Astrocyte of the cerebellum (primary cell): ENCODE measurements at regions of chr12 and their contacts with region 1.

Region 1: DNA sequence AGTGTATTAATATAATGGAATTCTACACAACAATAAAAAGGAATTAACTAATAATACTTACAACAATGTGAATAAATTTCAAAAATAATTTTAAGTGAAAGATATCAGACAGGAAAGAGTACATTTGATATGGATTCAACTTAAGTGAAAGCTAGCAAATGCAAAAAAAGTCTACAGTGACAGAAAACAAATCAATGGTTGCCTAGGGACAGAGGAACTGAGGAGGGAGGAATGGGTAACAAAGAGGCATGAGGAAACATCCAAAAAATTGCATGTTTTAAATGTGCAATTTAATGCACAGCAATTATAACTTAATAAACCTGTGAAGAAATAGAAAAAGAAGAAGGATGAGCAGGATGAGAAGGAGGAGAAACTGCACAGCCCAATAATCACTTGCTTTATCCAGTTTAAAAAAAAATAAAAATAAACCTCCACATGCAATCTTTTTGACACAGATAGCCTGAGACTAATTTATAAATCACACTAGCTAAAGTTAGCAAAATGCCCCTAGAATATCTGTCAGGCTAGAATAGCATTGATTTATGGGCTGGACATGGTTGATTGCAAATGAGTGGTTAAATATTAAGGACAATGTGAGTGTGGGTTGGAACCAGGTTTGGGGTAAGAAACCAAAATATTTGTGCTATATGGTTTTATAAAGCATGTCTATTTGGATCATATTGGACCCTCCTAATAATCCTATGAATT is 1089.1 kb downstream of the TRHDE start:
- DNase-seq: no peak
- H3K4me3 ChIP-seq: no peak overlapping the region
- CTCF ChIP-seq: no peak

Region 2: DNA sequence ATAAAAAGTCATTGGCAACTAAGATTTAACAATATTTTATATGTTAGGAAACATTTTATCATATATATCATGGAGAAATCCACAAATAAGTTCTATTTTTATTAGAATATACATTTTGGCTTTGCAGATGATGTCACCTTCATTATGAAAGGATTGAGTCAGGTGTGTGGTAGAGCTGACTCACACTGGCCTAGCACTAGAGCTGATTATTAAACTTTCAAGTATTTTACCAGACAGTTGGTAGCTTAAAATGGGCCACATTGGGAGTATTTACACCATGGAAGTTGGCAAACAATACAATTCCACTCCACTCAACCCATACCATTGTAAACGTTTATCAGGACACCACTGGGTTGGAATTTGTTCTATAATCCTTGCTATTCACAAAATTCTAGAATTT is 52.6 kb before region 1 on chr12:
- in situ Hi-C with region 1: no loop called
- DNase-seq: no peak
- H3K4me3 ChIP-seq: no peak overlapping the region
- CTCF ChIP-seq: no peak

Region 3: GRCh38 chr12:73321776-73322175 is 39.5 kb before region 1 on chr12:
- in situ Hi-C with region 1: loop called (anchors 5 kb)
- DNase-seq: no peak
- H3K4me3 ChIP-seq: no peak overlapping the region
- CTCF ChIP-seq: no peak

Region 4: GRCh38 chr12:73421832-73422231 is 60.5 kb after region 1 on chr12:
- in situ Hi-C with region 1: loop called (anchors 5 kb)
- DNase-seq: no peak
- H3K4me3 ChIP-seq: no peak overlapping the region
- CTCF ChIP-seq: no peak

Region 5: DNA sequence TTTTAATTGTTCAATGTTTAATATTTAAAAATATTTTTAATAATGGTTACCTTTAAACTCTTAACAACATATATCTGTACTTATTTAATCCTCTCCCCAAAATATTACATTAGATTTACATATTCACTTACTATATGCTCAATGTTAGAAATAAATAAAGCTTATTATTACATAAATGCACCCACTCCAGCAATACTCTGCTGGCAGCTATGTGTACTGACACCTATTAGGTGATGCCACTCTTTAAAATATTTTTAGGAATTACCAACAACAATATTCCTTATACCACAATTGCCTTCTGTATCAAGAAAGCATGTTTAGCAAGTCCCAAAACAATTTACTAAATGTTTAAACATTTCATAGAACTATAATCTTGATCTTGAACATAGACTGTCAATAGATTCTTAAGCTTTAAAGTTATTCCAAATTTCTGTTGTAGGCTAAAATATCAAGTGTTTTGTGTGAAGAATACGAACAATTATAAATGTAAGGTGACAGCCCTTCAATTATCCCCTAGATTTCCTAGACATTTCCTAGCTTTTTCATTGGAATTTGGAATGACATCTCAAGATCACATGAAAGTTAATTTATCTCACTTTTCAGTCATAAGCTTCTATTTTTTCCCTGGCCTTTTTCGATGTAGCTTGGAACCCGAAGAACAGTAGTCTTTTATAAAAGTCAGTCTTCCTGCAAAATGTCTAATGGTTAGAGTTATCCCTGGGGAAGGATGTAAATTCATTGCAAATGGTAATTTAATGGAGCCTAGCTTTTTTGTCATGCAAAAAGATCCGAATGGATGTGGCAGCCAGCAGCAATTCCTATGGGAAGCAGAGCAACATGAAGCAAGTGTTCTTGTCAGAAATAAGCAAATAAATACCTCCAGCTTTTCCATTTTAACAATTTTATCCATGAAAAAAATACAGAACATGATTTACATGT is 268.9 kb after region 1 on chr12:
- in situ Hi-C with region 1: no loop called
- DNase-seq: no peak
- H3K4me3 ChIP-seq: no peak overlapping the region
- CTCF ChIP-seq: no peak